Esophagus squamous epithelium (tissue), 5 donors: ENCODE measurements at regions of chr12 and their contacts with region 1.

Region 1: GRCh38 chr12:132986001-132986912 is at the start of gene ZNF26:
- DNase-seq: peak; percentile 54
- H3K4me3 ChIP-seq: peak within 1 kb of the TSS; percentile 76 to 88 (median 84)
- H3K27ac ChIP-seq: peak within 1 kb of the TSS; percentile 79 to 92 (median 89)
- H3K4me1 ChIP-seq: peaks cover 9 to 23% (median 12%) of the 10 kb centered on the region in 3 donors
- H3K27me3 ChIP-seq: no peaks in the 10 kb centered on the region
- CTCF ChIP-seq: peak in 1 of 6 experiments; percentile 37
- POLR2A ChIP-seq: peak in 2 of 4 donors; percentile 11 to 29
- total RNA-seq, gene ZNF26: 2.7 to 17.9 (median 5.9) TPM

Region 2: DNA sequence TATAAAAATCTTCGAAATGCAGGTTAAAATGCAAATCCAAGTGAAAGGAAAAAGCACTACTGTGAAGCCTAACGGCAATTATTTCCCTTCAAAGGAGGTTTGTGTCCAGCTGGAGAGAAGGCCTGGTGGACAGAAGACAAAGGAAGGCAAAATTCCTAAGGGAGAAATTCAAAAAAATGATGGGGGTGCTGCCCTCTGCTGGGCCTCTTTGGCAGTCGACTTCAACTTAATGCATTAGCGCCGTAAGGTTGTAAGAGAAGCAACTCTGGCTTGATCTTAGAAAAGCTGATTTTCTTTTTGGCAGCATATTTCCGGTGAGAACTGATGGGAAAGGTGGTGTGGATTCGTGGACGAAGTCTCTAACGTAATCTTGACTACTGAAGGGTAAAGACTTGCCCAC is 64.6 kb before region 1 on chr12:
- intact Hi-C with region 1: no loop called
- DNase-seq: no peak
- H3K4me3 ChIP-seq: no peak overlapping the region
- H3K27ac ChIP-seq: no peak overlapping the region
- H3K4me1 ChIP-seq: no peaks in the 10 kb centered on the region
- H3K27me3 ChIP-seq: no peaks in the 10 kb centered on the region
- CTCF ChIP-seq: no peak
- POLR2A ChIP-seq: no peak

Region 3: DNA sequence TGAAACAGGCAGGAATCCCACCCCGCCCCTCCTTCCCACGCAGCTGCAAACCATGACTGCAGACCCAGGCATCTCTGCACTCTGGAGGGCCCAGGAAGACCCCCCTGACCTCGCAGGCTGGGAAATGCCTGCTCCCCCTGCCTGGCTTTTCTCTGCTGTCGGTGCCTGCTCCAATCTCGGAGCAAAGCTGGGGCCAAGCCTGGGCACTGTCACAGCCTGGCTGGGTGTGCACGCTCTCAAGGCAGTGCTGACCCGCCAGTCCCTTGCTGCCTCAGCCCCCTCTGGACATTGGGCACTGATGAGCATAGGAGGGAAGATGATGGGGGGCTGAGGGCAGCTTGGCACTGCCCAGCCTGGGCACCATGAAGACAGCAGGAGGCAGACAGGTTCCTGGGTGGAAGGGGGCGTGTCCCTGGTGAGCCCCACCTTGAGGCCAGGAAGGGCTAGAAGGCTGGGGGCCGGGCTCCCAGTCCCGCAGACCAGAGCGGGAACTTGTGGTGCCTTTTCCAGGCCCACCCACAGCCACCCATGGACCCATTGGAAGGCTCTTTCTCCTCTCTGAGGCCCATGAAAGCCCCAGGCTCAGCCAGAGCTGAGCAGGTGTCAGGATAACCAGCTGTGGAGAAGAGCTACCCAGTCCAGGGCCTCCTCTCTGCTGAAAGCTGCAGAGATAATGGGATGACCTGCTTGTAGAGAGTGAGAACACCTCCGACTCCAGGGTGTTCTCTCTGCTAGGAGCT is 19.4 kb before region 1 on chr12:
- intact Hi-C with region 1: no loop called
- DNase-seq: no peak
- H3K4me3 ChIP-seq: no peak overlapping the region
- H3K27ac ChIP-seq: no peak overlapping the region
- H3K4me1 ChIP-seq: no peaks in the 10 kb centered on the region
- H3K27me3 ChIP-seq: no peaks in the 10 kb centered on the region
- CTCF ChIP-seq: no peak
- POLR2A ChIP-seq: no peak

Region 4: GRCh38 chr12:133037207-133038005 is 51.1 kb after region 1 on chr12 and contains the start of gene ZNF84:
- intact Hi-C with region 1: loop called (anchors 10 kb)
- DNase-seq: peak; percentile 83
- H3K4me3 ChIP-seq: peak within 1 kb of the TSS; percentile 71 to 89 (median 82)
- H3K27ac ChIP-seq: peak within 1 kb of the TSS; percentile 90 to 99 (median 97)
- H3K4me1 ChIP-seq: peaks cover 0 to 19% (median 9%) of the 10 kb centered on the region in 3 donors
- H3K27me3 ChIP-seq: no peaks in the 10 kb centered on the region
- CTCF ChIP-seq: peak in 1 of 6 experiments; percentile 34
- POLR2A ChIP-seq: peak in 2 of 4 donors; percentile 61 to 81
- total RNA-seq, gene ZNF84: 5.3 to 21.2 (median 6.6) TPM